Ovary (tissue), 10 donors: ENCODE measurements at regions of chr13 and their contacts with region 1.

Region 1: DNA sequence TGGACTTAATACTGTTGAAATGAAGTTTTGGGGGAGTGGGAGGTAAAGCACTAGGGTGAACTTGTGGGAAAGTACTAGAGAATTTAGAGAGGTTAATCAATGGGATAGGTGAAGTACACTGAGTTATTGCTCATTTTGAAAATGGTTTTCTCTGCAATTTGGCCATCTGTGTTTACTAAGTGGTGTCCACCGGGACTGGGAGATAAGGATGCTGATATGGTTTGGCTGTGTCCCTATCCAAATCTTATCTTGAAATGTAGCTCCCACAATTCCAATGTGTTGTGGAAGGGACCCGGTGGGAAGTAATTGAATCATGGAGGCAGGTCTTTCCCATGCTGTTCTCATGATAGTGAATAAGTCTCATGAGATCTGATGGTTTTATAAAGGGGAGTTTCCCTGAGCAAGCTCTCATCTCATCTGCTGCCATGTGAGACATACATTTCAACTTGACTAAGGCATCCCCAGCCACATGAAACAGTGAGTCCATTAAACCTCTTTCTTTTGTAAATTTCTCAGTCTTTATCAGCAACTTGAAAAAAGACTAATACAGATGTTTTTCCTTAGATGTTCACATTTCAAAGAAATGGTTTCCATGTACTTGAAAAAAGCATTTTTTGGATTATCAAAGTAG is 1569.4 kb upstream of the PRR20A start:
- DNase-seq: no peak
- H3K4me3 ChIP-seq: no peak overlapping the region
- H3K27ac ChIP-seq: no peak overlapping the region
- H3K4me1 ChIP-seq: no peaks in the 10 kb centered on the region
- H3K27me3 ChIP-seq: no peaks in the 10 kb centered on the region
- CTCF ChIP-seq: no peak
- EP300 ChIP-seq: no peak
- POLR2A ChIP-seq: no peak

Region 2: DNA sequence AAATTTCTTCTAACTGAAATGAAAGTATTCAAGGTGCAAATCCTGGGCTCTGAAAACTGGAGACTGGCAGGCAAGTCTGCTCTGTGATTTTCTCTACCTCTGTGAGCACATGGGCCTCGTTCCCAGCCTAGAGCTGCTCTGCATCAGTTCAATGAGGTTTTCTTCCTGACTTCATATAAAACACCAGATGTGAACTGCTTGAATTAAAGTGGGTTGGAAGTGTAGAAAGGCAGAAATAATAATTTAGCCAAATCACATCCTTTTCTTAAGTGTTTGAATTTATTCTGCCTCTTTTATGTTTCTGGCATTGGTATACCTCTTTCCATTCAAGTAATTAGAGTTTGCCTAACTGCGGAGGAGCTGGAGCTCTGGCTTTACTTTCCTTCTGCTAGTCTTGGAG is 2001.9 kb before region 1 on chr13:
- intact Hi-C with region 1: loop called in 1 of 4 experiments (anchors 5 kb)
- DNase-seq: no peak
- H3K4me3 ChIP-seq: no peak overlapping the region
- H3K27ac ChIP-seq: no peak overlapping the region
- H3K4me1 ChIP-seq: no peaks in the 10 kb centered on the region
- H3K27me3 ChIP-seq: no peaks in the 10 kb centered on the region
- CTCF ChIP-seq: no peak
- EP300 ChIP-seq: no peak
- POLR2A ChIP-seq: no peak